ENCODE measurements at regions of chr12 and their contacts with region 1.

Region 1: GRCh38 chr12:95582230-95583058 is 31.2 kb upstream of the USP44 start:
- DNase-seq: peak in 1 of 2 experiments; percentile 56
- H3K4me3 ChIP-seq: no peak overlapping the region
- H3K27ac ChIP-seq: no peak overlapping the region; the same call in 1 of the 2 replicates
- H3K4me1 ChIP-seq: 0 out of 2 replicates have a peak, but pooled peaks cover 6% of the 10 kb centered on the region
- H3K27me3 ChIP-seq: no peaks in the 10 kb centered on the region
- CTCF ChIP-seq: peak; percentile 66

Region 2: GRCh38 chr12:95497031-95497430 is 85.4 kb before region 1 on chr12:
- CTCF ChIA-PET with region 1: no interaction called
- POLR2A ChIA-PET with region 1: no interaction called
- intact Hi-C with region 1: no loop called
- DNase-seq: no peak
- H3K4me3 ChIP-seq: no peak overlapping the region
- H3K27ac ChIP-seq: no peak overlapping the region
- H3K4me1 ChIP-seq: no peaks in the 10 kb centered on the region
- H3K27me3 ChIP-seq: no peaks in the 10 kb centered on the region
- CTCF ChIP-seq: no peak

Region 3: GRCh38 chr12:95649375-95649791 is 66.9 kb after region 1 on chr12:
- CTCF ChIA-PET with region 1: no interaction called
- POLR2A ChIA-PET with region 1: no interaction called
- intact Hi-C with region 1: loop called (anchors 2 kb)
- DNase-seq: peak; percentile 86 to 98
- H3K4me3 ChIP-seq: peak overlapping the region; percentile 27; the same call in 1 of the 2 replicates
- H3K27ac ChIP-seq: peak overlapping the region; percentile 98
- H3K4me1 ChIP-seq: peaks cover 72% of the 10 kb centered on the region
- H3K27me3 ChIP-seq: no peaks in the 10 kb centered on the region
- CTCF ChIP-seq: no peak

Region 4: GRCh38 chr12:95687937-95688336 is 105.5 kb after region 1 on chr12:
- CTCF ChIA-PET with region 1: no interaction called
- POLR2A ChIA-PET with region 1: no interaction called
- intact Hi-C with region 1: no loop called
- DNase-seq: no peak
- H3K4me3 ChIP-seq: no peak overlapping the region
- H3K27ac ChIP-seq: no peak overlapping the region
- H3K4me1 ChIP-seq: no peaks in the 10 kb centered on the region
- H3K27me3 ChIP-seq: no peaks in the 10 kb centered on the region
- CTCF ChIP-seq: no peak

Region 5: GRCh38 chr12:95717974-95718431 is 135.6 kb after region 1 on chr12:
- CTCF ChIA-PET with region 1: no interaction called
- POLR2A ChIA-PET with region 1: no interaction called
- intact Hi-C with region 1: loop called (anchors 10 kb)
- DNase-seq: peak; percentile 14 to 91
- H3K4me3 ChIP-seq: no peak overlapping the region
- H3K27ac ChIP-seq: peak overlapping the region; percentile 38
- H3K4me1 ChIP-seq: peaks cover 23% of the 10 kb centered on the region
- H3K27me3 ChIP-seq: no peaks in the 10 kb centered on the region
- CTCF ChIP-seq: no peak

Region 6: DNA sequence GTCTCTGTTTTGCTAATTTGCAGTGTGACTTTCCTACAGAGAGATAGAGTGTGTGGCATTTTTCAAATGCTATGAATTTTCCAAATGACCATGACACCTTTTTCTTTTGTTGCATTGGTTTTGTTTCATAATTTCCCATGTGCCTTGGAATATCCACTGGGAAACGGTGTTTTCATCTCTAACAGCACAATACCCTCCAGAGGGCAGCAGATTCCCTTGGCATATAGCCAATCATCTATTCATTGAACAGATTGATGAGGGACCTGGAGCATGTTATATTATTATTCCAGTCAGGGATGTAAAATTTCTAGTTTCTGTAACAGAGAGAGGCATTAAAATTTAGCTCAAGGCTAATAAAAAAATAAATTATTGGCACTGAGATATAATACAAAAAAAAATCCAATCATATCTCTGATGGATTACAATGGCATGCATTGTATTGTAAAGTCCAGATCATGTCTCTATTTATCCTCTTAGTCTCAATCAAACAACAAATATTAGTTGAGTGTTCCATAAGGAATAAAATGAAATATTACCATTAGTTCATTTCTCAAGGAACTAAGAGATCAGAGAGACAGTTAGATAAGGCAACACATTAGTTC is 237.8 kb after region 1 on chr12:
- CTCF ChIA-PET with region 1: no interaction called
- POLR2A ChIA-PET with region 1: no interaction called
- intact Hi-C with region 1: loop called (anchors 1 kb)
- DNase-seq: peak in 1 of 2 experiments; percentile 46
- H3K4me3 ChIP-seq: no peak overlapping the region
- H3K27ac ChIP-seq: no peak overlapping the region
- H3K4me1 ChIP-seq: peaks cover 4% of the 10 kb centered on the region
- H3K27me3 ChIP-seq: no peaks in the 10 kb centered on the region
- CTCF ChIP-seq: peak; percentile 69

Region 7: DNA sequence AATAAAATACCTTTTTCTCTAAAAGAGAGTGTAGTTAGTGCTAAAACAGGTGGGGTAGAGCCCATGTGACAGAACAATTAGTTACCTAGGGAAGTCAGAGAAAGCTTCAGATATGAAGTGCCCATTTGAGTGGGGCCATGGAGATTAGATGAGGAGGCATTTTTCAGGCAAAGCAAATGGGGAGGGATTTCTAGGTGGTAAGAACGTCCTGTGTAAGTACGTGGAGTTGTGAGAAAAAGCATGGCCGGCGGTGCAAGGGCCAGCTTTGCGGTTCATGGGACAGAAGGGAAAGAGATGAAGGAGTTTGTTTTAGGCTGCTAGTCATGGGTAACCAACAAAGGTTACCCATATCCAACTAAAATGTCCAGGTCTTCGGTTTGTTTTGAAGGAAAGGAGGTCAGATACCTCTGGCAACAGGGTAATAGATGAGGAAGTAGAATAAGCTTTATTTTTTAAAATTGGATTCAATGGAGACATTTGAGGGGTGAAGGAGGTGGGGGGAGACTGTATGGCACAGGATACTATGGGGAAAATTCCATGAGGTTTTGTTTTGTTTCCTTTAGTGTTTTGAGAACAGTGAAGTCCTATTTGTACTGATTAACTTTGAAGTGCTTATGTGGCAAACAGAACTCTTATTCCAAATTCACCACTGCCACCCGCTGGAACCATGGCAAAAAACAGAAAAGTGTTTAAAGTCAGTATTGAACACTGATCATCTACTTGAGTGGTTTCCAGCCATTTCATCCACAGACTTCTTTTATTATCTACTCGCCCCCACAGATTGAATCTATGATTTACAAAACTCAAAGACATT is 266.3 kb after region 1 on chr12:
- CTCF ChIA-PET with region 1: no interaction called
- POLR2A ChIA-PET with region 1: no interaction called
- intact Hi-C with region 1: loop called (anchors 5 kb)
- DNase-seq: peak; percentile 36 to 49
- H3K4me3 ChIP-seq: no peak overlapping the region
- H3K27ac ChIP-seq: no peak overlapping the region
- H3K4me1 ChIP-seq: no peaks in the 10 kb centered on the region
- H3K27me3 ChIP-seq: no peaks in the 10 kb centered on the region
- CTCF ChIP-seq: peak; percentile 65

Measured in PC-9 (cell line).